HEK293 (cell line): ENCODE measurements at regions of chr17 and their contacts with region 1.

Region 1: GRCh38 chr17:36629252-36629847 is 28.0 kb downstream of the MRM1 start:
- H3K4me3 ChIP-seq: no peak overlapping the region
- H3K27ac ChIP-seq: no peak overlapping the region
- H3K4me1 ChIP-seq: no peaks in the 10 kb centered on the region
- CTCF ChIP-seq: peak; percentile 99

Region 2: GRCh38 chr17:36500745-36501225 is 128.6 kb before region 1 on chr17:
- CTCF ChIA-PET with region 1: no interaction called
- POLR2A ChIA-PET with region 1: no interaction called
- H3K4me3 ChIP-seq: no peak overlapping the region
- H3K27ac ChIP-seq: no peak overlapping the region
- H3K4me1 ChIP-seq: no peaks in the 10 kb centered on the region
- CTCF ChIP-seq: no peak

Region 3: GRCh38 chr17:36601303-36602029 is 27.9 kb before region 1 on chr17 and contains the start of gene MRM1:
- CTCF ChIA-PET with region 1: interaction called, 45 read pairs
- POLR2A ChIA-PET with region 1: interaction called, 5 read pairs
- H3K4me3 ChIP-seq: peak within 1 kb of the TSS; percentile 88
- H3K27ac ChIP-seq: peak within 1 kb of the TSS; percentile 56
- H3K4me1 ChIP-seq: peaks cover 9% of the 10 kb centered on the region; the same call in 1 of the 2 replicates
- CTCF ChIP-seq: peak; percentile 61; the same call in 1 of the 2 replicates

Region 4: DNA sequence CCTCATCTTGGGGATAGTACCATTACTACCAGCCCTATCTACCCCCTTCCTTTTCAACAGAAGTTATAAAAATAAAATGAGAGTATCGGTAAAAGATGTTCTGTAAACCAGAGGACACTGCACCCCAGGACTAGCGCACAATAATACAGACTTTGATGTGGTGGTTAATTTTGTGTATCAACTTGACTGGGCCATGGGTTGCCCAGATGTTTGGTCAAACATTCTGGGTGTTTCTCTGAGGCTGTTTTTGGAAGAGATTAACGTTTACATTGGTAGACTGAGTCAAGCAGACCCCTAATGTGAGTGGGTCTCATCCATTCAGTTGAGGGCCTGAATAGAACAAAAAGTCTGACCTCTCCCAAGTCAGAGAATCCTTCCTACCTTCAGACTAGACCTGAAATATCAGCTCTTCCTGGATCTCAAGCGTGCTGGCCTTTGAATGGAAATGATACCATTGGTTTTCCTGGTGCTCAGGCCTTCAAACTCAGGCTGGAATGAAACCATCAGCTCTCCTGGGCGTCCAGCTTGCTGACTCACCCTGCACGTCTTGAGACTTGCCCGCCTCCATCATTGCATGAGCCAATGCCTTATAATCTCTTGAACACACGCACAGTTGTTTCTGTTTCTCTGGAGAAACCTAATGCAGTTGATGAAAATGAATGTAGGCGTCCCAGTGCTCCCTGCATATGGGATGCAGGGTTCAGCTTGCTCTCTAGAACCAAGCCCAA is 17.8 kb before region 1 on chr17:
- CTCF ChIA-PET with region 1: interaction called, 14 read pairs
- POLR2A ChIA-PET with region 1: interaction called, 4 read pairs
- H3K4me3 ChIP-seq: no peak overlapping the region
- H3K27ac ChIP-seq: no peak overlapping the region
- H3K4me1 ChIP-seq: no peaks in the 10 kb centered on the region; the same call in 1 of the 2 replicates
- CTCF ChIP-seq: no peak

Region 5: GRCh38 chr17:36657763-36658490 is 28.6 kb after region 1 on chr17:
- CTCF ChIA-PET with region 1: interaction called, 11 read pairs
- POLR2A ChIA-PET with region 1: no interaction called
- H3K4me3 ChIP-seq: peak overlapping the region; percentile 48
- H3K27ac ChIP-seq: peak overlapping the region; percentile 28; the same call in 1 of the 2 replicates
- H3K4me1 ChIP-seq: 0 out of 2 replicates have a peak, but pooled peaks cover 2% of the 10 kb centered on the region
- CTCF ChIP-seq: peak; percentile 85

Region 6: DNA sequence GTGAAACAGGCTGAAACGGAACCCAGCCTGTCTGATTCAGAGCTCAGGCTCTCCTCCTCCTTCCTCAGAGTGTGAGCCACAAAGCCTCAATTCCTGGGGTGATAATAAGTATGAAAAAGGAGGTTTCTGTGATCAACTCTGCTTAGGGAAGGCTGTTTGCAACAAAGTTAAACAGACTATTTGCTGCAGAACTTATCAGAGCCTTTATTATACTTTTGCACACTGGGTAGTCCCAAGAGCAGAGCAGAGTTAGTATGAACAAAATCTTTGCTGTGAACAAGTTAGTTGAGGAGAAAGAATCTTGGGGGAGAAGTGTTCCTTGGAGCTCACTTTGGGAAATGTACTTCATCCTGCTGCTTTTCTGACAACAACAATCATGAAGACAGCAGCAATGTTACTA is 39.5 kb after region 1 on chr17:
- CTCF ChIA-PET with region 1: no interaction called
- POLR2A ChIA-PET with region 1: no interaction called
- H3K4me3 ChIP-seq: no peak overlapping the region
- H3K27ac ChIP-seq: no peak overlapping the region
- H3K4me1 ChIP-seq: no peaks in the 10 kb centered on the region
- CTCF ChIP-seq: no peak

Region 7: GRCh38 chr17:36755586-36755985 is 126.2 kb after region 1 on chr17:
- CTCF ChIA-PET with region 1: interaction called, 14 read pairs
- POLR2A ChIA-PET with region 1: interaction called, 4 read pairs
- H3K4me3 ChIP-seq: no peak overlapping the region
- H3K27ac ChIP-seq: no peak overlapping the region
- H3K4me1 ChIP-seq: no peaks in the 10 kb centered on the region
- CTCF ChIP-seq: peak; percentile 37

Region 8: GRCh38 chr17:37239690-37240334 is 610.5 kb after region 1 on chr17:
- CTCF ChIA-PET with region 1: interaction called, 51 read pairs
- POLR2A ChIA-PET with region 1: no interaction called
- H3K4me3 ChIP-seq: no peak overlapping the region
- H3K27ac ChIP-seq: no peak overlapping the region
- H3K4me1 ChIP-seq: no peaks in the 10 kb centered on the region
- CTCF ChIP-seq: 0 out of 2 replicates have a peak, but pooled peaks have one; percentile 38